OCI-LY7 (cell line): ENCODE measurements at regions of chr3 and their contacts with region 1.

Region 1: GRCh38 chr3:87503900-87504508 is 227.6 kb upstream of the POU1F1 start:
- DNase-seq: peak; percentile 56
- H3K4me3 ChIP-seq: no peak overlapping the region
- H3K27ac ChIP-seq: no peak overlapping the region
- H3K4me1 ChIP-seq: no peaks in the 10 kb centered on the region
- CTCF ChIP-seq: peak; percentile 82

Region 2: DNA sequence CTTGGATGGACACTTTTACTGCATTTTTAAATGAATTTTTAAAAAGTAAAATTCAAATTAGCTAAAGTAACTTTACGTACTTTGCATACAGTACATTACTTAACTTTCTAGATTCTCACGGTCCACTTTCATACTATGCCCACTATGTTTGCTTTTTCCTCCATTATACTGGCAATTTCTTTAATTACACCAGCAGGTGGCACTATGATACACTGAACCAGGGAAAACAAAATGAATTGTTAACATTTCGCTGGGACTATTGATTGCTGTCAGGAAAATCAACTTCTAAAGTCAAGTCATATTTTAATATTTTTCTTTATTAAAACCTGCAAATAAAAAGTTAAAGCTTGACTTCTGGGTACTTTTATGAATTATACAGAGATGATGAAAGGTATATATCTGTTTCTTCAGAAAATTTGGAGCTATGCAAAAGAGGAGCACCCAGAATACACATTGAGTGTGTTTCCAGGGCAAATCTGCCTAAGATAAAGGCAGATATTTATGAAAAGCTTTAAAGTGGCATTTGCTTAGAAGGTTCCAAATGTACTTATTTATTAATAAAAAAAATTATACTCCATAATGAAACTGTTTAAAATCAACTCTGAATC is 205.8 kb before region 1 on chr3:
- CTCF ChIA-PET with region 1: no interaction called
- POLR2A ChIA-PET with region 1: no interaction called
- intact Hi-C with region 1: loop called (anchors 10 kb)
- DNase-seq: peak; percentile 38
- H3K4me3 ChIP-seq: no peak overlapping the region
- H3K27ac ChIP-seq: no peak overlapping the region
- H3K4me1 ChIP-seq: no peaks in the 10 kb centered on the region
- CTCF ChIP-seq: peak; percentile 92

Region 3: GRCh38 chr3:87350364-87351199 is 153.4 kb before region 1 on chr3:
- CTCF ChIA-PET with region 1: no interaction called
- POLR2A ChIA-PET with region 1: no interaction called
- intact Hi-C with region 1: loop called (anchors 5 kb)
- DNase-seq: peak; percentile 64
- H3K4me3 ChIP-seq: no peak overlapping the region
- H3K27ac ChIP-seq: no peak overlapping the region
- H3K4me1 ChIP-seq: no peaks in the 10 kb centered on the region
- CTCF ChIP-seq: peak; percentile 96

Region 4: DNA sequence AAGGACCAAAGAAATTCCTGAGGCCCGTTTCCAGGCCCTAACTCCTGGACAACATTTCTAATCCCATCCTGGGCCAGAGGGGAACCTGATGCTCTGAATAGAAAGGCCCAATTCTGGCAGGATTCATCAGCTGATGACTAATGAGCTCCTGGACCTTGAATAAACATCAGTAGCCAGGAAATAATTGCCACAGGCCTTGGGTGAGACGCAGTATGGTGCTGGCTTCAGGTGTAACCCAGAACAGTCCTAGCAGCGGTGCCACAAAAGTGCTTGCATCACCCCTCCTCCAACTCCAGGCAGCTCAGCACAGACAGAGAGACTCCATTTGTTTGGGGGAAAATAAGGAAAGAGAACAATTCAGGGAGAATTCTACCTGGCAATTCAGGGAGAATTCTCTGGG is 43.0 kb before region 1 on chr3:
- CTCF ChIA-PET with region 1: no interaction called
- POLR2A ChIA-PET with region 1: no interaction called
- intact Hi-C with region 1: no loop called
- DNase-seq: no peak
- H3K4me3 ChIP-seq: no peak overlapping the region
- H3K27ac ChIP-seq: no peak overlapping the region
- H3K4me1 ChIP-seq: no peaks in the 10 kb centered on the region
- CTCF ChIP-seq: no peak